PC-3 (cell line): ENCODE measurements at regions of chr4 and their contacts with region 1.

Region 1: GRCh38 chr4:153142700-153143438 is 61.4 kb upstream of the TRIM2 start:
- DNase-seq: peak; percentile 70
- ATAC-seq: peak; percentile 58
- H3K4me3 ChIP-seq: peak overlapping the region; percentile 1; the same call in 1 of the 2 replicates
- H3K27ac ChIP-seq: no peak overlapping the region
- H3K4me1 ChIP-seq: peaks cover 24% of the 10 kb centered on the region
- H3K27me3 ChIP-seq: no peaks in the 10 kb centered on the region
- CTCF ChIP-seq: peak; percentile 87

Region 2: DNA sequence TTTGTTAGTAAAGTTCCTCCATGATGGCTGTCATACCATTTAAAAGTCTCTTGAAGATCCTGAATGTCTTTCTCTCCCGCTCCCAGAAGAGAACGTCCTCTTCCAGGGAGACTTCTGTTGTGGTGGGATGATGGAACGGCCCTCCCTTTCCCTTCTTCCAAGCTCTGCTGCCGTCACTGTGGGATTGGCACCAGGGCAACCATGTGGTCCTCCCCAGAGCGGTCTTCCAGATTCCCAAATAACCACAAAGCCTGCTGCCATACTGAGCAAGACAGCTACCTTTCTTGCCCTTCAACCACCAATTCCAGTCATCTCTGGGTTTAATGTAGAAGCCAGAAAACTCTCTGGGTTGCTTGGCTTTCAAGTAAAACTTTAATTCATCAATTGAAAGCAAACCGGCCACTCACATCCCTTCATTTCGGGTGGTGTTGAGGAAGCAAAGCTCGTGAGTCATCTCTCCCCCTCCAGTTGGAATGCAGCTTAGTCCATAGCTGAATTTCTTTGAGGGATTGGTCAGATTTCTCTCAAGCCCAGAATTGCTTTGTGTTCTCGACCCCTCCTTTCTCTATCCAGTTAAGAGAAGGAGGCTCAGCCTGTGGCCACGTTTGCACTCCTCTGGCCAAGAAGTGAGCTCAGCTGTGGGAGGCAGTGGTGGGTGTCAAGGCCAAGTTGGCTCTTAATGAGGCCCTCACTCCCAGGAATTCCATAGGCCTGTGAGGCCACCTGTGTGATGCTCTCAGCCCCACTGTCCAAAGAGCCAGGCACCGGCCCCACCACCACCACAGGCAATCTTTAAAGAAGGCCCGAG is 169.8 kb before region 1 on chr4:
- CTCF ChIA-PET with region 1: no interaction called
- POLR2A ChIA-PET with region 1: no interaction called
- intact Hi-C with region 1: no loop called
- DNase-seq: peak; percentile 67
- ATAC-seq: no peak
- H3K4me3 ChIP-seq: no peak overlapping the region
- H3K27ac ChIP-seq: no peak overlapping the region
- H3K4me1 ChIP-seq: peaks cover 43% of the 10 kb centered on the region
- H3K27me3 ChIP-seq: no peaks in the 10 kb centered on the region
- CTCF ChIP-seq: no peak

Region 3: GRCh38 chr4:153318696-153319320 is 175.9 kb after region 1 on chr4:
- CTCF ChIA-PET with region 1: interaction called, 5 read pairs
- POLR2A ChIA-PET with region 1: no interaction called
- intact Hi-C with region 1: loop called (anchors 1 kb)
- DNase-seq: peak; percentile 66
- ATAC-seq: peak; percentile 65
- H3K4me3 ChIP-seq: no peak overlapping the region
- H3K27ac ChIP-seq: no peak overlapping the region
- H3K4me1 ChIP-seq: no peaks in the 10 kb centered on the region
- H3K27me3 ChIP-seq: no peaks in the 10 kb centered on the region
- CTCF ChIP-seq: peak; percentile 77